ENCODE measurements at regions of chr4 and their contacts with region 1.

Region 1: GRCh38 chr4:120718979-120719566 is 203.5 kb downstream of the PRDM5 start:
- DNase-seq: peak; percentile 11
- H3K4me3 ChIP-seq: no peak overlapping the region
- H3K27ac ChIP-seq: no peak overlapping the region
- H3K4me1 ChIP-seq: no peaks in the 10 kb centered on the region
- H3K27me3 ChIP-seq: no peaks in the 10 kb centered on the region
- CTCF ChIP-seq: peak; percentile 61 to 77

Region 2: DNA sequence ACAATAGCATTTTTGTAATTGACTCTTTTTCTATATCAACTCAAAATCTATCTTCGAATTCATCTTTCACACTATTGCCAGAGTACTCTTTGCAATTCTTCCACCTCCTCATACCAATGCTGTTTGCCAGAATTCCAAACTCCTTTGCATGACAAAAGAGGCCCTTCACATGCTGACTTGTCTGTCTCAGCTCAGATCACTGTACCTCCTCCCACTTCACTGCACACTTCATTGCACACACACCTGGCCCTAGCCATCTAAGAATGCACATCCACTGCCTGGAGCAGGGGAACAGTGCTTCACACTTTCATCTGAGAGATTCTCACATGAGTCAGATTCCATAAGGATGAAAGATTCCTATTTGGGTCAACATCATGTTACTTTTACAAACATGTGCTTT is 146.9 kb after region 1 on chr4:
- CTCF ChIA-PET with region 1: no interaction called
- dilution Hi-C with region 1: no loop called
- in situ Hi-C with region 1: no loop called
- intact Hi-C with region 1: no loop called
- DNase-seq: peak; percentile 3
- H3K4me3 ChIP-seq: no peak overlapping the region
- H3K27ac ChIP-seq: no peak overlapping the region
- H3K4me1 ChIP-seq: no peaks in the 10 kb centered on the region
- H3K27me3 ChIP-seq: no peaks in the 10 kb centered on the region
- CTCF ChIP-seq: no peak

Region 3: DNA sequence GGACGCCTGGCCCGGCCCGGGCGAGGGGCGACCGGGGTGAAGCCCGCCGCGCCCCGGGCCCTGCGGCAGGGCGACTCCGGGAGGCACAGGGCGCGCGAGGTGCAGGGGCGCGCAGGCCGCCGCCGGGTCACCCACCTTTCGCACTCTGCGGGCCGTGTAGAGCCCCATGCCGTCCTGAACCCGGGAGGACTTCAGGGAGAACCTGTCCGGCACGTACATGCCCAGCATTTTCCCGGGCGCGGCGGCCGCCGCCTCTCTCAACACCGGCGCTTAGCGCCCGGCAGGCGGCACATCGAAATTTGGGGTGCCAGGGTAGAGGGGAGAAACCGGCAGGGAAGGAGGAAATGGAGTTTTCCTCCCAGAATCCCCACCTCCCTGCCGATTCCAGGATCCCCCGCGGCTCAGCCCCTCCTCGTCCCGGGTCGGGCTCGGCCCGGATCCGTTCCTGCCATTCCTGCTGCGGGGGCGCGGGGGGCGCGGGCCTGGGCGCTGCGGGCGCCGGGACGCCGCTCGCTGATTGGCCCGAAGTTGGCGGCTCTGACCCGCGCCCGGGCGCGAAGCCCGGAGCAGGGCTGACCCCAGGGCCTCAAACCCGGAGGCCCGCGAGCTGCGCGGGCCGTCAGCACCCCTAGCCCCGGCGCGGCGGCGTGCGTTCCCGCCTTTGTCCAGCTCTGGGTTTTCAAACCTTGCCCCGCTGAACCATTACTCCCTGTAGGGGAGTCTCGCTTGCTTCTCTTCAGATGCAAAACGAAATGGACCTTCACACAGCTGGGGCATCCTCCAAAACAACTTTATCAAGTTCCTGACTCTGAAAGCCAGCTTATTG is 203.5 kb after region 1 on chr4 and contains the start of gene PRDM5:
- CTCF ChIA-PET with region 1: no interaction called
- dilution Hi-C with region 1: no loop called
- in situ Hi-C with region 1: no loop called
- intact Hi-C with region 1: loop called (anchors 2 kb)
- DNase-seq: peak; percentile 35
- H3K4me3 ChIP-seq: peak within 1 kb of the TSS; percentile 78 to 92 (median 82)
- H3K27ac ChIP-seq: peak within 1 kb of the TSS; percentile 77
- H3K4me1 ChIP-seq: peaks cover 13% of the 10 kb centered on the region
- H3K27me3 ChIP-seq: no peaks in the 10 kb centered on the region
- CTCF ChIP-seq: peak in 1 of 2 donors; percentile 45
- total RNA-seq, gene PRDM5: 7.9 to 19.0 TPM

Region 4: GRCh38 chr4:120977435-120977997 is 258.4 kb after region 1 on chr4:
- CTCF ChIA-PET with region 1: no interaction called
- dilution Hi-C with region 1: no loop called
- in situ Hi-C with region 1: no loop called
- intact Hi-C with region 1: loop called (anchors 10 kb)
- DNase-seq: peak; percentile 47
- H3K4me3 ChIP-seq: no peak overlapping the region
- H3K27ac ChIP-seq: no peak overlapping the region
- H3K4me1 ChIP-seq: no peaks in the 10 kb centered on the region
- H3K27me3 ChIP-seq: no peaks in the 10 kb centered on the region
- CTCF ChIP-seq: peak; percentile 66 to 69

Region 5: DNA sequence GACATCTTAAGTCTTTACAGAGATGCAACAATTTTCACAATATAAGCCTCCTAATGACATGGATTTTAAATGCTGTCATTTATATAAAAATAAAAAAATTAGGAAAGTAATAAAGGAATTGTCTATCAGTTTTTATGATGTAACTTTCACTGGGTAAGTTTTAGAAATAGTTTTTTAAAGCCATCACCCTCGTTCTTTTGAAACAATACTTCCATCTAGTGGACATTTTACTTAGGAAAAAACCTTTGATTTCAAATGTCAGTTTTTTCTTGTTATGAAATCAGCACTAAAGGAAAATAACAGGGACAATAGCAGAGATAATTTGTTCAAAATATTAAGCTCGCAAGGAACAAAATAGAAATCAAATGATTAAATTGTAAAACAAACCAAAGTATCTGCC is 377.6 kb after region 1 on chr4:
- CTCF ChIA-PET with region 1: no interaction called
- dilution Hi-C with region 1: no loop called
- in situ Hi-C with region 1: no loop called
- intact Hi-C with region 1: loop called (anchors 1 kb)
- DNase-seq: peak; percentile 7
- H3K4me3 ChIP-seq: no peak overlapping the region
- H3K27ac ChIP-seq: no peak overlapping the region
- H3K4me1 ChIP-seq: no peaks in the 10 kb centered on the region
- H3K27me3 ChIP-seq: peaks cover 2% of the 10 kb centered on the region
- CTCF ChIP-seq: peak; percentile 30 to 54

Measured in mammary epithelial cell (primary cell).